Keratinocyte (primary cell): ENCODE measurements at regions of chr16 and their contacts with region 1.

Region 1: GRCh38 chr16:48353565-48354163 is 31.5 kb downstream of the SIAH1 start:
- DNase-seq: peak; percentile 35
- H3K4me3 ChIP-seq: no peak overlapping the region
- H3K27ac ChIP-seq: no peak overlapping the region
- H3K4me1 ChIP-seq: no peaks in the 10 kb centered on the region
- H3K27me3 ChIP-seq: no peaks in the 10 kb centered on the region
- CTCF ChIP-seq: peak; percentile 85 to 96 (median 87)

Region 2: DNA sequence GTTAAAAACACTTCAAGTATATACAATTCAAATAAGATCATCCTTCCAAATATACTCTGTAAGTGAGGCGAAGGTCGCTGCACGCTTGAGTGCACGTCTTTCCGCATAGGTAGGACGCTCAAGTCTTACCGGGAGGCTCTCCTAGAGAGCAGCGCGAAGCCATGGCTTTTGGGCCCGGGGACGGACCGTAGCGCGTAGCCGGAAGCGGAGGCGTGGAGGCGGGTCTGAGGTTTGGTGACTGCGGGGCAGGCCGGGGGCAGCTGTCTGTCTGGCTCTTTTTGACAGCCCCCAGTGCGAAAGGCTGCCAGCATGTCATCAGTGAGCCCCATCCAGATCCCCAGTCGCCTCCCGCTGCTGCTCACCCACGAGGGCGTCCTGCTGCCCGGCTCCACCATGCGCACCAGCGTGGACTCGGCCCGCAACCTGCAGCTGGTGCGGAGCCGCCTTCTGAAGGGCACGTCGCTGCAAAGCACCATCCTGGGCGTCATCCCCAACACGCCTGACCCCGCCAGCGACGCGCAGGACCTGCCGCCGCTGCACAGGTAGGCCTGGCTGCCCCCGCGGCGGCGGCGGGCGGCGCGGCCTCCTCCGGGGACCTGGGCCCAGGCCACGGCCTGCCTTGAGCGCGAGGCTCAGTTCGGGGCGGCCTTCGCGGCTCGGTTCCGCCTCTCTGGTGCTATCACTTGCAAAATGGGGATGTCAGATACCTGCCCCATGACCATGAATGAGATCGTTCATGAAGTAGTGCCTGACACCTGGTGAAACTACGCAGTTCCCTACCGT is 109.4 kb before region 1 on chr16 and contains the start of gene LONP2:
- dilution Hi-C with region 1: no loop called
- DNase-seq: peak; percentile 30
- H3K4me3 ChIP-seq: peak within 1 kb of the TSS; percentile 70 to 86 (median 71)
- H3K27ac ChIP-seq: peak within 1 kb of the TSS; percentile 82
- H3K4me1 ChIP-seq: peaks cover 22% of the 10 kb centered on the region
- H3K27me3 ChIP-seq: no peaks in the 10 kb centered on the region
- CTCF ChIP-seq: no peak
- polyA plus RNA-seq, gene LONP2: 34.6 to 50.6 TPM (median 49.4 TPM) in 3 replicates

Region 3: DNA sequence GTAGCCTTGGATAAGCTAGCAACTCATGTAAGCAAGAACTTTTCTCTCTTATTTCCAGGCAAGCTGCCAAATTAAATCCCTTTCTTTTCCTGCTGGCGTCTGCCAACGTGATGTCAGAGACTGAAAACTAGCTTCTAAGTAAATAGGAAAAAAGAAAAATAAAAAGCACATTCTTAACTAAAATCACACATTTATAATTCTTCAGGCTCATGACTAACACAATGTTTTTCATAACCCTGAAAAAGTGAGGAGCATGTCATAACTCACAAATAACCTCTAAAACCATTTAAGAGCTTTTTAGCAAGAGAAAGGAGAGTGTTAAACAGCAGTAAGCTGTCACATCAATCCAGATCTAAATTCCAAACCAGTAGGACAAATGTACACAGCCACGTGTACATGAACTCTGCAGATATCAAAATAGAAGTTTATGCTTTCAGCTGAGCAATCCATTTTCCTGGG is 146.3 kb after region 1 on chr16:
- dilution Hi-C with region 1: loop called (anchors 25 kb)
- DNase-seq: no peak
- H3K4me3 ChIP-seq: no peak overlapping the region
- H3K27ac ChIP-seq: no peak overlapping the region
- H3K4me1 ChIP-seq: peaks cover 9% of the 10 kb centered on the region
- H3K27me3 ChIP-seq: no peaks in the 10 kb centered on the region
- CTCF ChIP-seq: no peak